Uterus (tissue), 4 donors: ENCODE measurements at regions of chr10 and their contacts with region 1.

Region 1: DNA sequence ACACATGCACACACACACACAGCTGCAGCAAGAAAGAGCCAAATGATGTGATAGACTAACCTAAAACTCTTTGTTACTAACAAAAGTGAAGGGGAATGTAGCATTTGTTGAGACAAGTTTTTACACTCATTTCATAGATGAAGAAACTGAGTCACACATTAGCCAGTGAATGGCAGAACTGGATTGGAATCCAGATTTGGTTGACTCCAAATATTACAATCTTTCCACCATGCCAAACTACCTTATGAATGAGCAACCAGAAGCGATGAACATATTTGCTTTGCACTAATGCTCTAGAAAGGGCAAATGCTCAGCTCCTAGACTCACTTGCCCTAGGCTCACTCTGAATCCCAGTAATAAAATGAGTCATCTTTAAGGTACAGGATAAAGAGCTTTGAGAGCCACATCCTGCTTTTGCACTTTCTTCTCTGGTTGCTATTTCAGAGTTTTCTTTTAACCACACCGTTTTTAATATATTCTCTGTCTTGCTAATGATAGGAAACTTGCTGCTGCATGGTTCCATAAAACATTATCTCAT is 111.9 kb downstream of the GPAM start:
- DNase-seq: no peak
- H3K4me3 ChIP-seq: no peak overlapping the region
- H3K27ac ChIP-seq: no peak overlapping the region
- H3K4me1 ChIP-seq: no peaks in the 10 kb centered on the region
- H3K27me3 ChIP-seq: no peaks in the 10 kb centered on the region
- CTCF ChIP-seq: no peak
- POLR2A ChIP-seq: no peak

Region 2: GRCh38 chr10:111762114-111762513 is 309.6 kb before region 1 on chr10:
- intact Hi-C with region 1: no loop called
- DNase-seq: no peak
- H3K4me3 ChIP-seq: no peak overlapping the region
- H3K27ac ChIP-seq: no peak overlapping the region
- H3K4me1 ChIP-seq: no peaks in the 10 kb centered on the region
- H3K27me3 ChIP-seq: no peaks in the 10 kb centered on the region
- CTCF ChIP-seq: no peak
- POLR2A ChIP-seq: no peak

Region 3: GRCh38 chr10:113267619-113268562 is 1196.2 kb after region 1 on chr10:
- intact Hi-C with region 1: loop called (anchors 10 kb)
- DNase-seq: no peak
- H3K4me3 ChIP-seq: no peak overlapping the region
- H3K27ac ChIP-seq: no peak overlapping the region
- H3K4me1 ChIP-seq: no peaks in the 10 kb centered on the region
- H3K27me3 ChIP-seq: no peaks in the 10 kb centered on the region
- CTCF ChIP-seq: no peak
- POLR2A ChIP-seq: no peak